ENCODE measurements at regions of chr11 and their contacts with region 1.

Region 1: DNA sequence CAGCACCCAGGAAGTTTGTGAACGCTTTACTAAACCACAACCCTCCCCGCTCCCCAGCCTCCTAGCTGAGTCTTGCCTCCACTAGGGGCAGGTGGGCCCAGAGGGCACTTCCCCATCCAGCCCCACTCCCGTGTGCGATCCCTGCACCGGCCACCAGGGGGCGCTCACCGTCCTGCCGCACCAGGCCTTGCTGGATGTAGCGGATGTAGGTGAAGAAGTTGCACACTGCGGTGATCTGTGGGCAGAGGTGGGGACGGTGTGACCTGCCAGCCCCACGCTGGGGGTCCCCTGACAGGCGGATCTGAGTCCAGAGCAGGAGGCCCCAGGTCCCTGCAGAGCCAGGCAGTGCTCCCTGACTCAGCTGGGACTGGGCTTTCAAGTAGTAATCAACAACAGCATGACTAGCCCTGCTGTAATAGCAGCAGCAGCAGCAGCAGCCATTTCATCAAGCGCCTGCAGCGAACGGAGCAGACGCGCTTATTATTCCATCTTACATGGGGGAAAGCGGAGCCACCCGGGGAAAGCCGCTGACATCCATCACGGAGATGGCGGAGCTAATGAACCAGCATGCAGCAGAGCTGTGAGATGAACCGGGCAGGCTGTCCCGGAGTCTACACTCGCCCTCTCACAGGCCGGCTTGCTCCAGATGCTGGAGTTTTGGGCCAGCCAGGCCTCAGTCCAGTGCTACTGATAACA is 7.9 kb upstream of the FADS3 start:
- DNase-seq: peak; percentile 94
- H3K4me3 Mint-ChIP-seq: no peak overlapping the region
- H3K27ac Mint-ChIP-seq: no peak overlapping the region
- H3K4me1 Mint-ChIP-seq: peaks cover 7% of the 10 kb centered on the region
- H3K27me3 Mint-ChIP-seq: no peaks in the 10 kb centered on the region

Region 2: DNA sequence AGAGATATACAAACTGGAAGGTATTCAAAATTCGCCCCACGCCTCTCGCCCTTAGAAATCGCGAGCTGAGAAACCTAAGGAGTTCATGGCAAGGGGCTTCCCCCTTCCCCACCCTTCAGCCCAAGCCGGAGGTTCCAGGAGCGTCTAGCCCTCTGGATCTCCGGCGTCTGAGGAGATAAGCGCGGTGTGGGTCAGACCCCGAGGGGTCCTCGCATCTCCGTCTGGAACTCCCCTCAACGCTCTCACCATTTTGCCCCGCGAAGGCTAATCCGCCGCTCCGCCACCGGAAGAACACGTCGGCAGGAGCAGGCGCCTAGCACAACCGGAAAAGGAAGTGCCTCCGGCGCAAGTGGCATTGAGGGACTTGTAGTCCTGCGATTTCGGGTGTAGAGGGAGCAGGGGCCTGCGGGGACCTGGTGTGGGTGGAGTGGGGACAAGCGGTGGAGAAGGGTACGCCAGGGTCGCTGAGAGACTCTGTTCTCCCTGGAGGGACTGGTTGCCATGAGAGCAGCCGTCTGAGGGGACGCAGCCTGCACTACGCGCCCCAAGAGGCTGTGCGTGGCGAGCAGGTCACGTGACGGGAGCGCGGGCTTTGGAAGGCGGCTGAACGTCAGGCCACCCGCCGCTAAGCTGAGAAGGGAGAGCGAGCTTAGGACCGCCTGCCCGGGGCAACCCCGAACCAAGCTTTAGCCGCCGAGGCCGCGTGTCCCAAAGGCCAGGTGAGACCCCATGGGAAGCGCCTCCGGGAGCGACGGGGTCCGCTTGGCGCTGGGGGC is 106.8 kb before region 1 on chr11 and contains the starts of genes FEN1 and TMEM258:
- CTCF ChIA-PET with region 1: interaction called, 49 read pairs
- POLR2A ChIA-PET with region 1: no interaction called
- intact Hi-C with region 1: loop called (anchors 2 kb)
- DNase-seq: peak; percentile 92
- H3K4me3 Mint-ChIP-seq: peak within 1 kb of the TSS; percentile 88
- H3K27ac Mint-ChIP-seq: peak within 1 kb of the TSS; percentile 99
- H3K4me1 Mint-ChIP-seq: peaks cover 47% of the 10 kb centered on the region
- H3K27me3 Mint-ChIP-seq: no peaks in the 10 kb centered on the region
- total RNA-seq, gene FEN1: 108 to 111 TPM
- total RNA-seq, gene TMEM258: 191 to 192 TPM

Region 3: DNA sequence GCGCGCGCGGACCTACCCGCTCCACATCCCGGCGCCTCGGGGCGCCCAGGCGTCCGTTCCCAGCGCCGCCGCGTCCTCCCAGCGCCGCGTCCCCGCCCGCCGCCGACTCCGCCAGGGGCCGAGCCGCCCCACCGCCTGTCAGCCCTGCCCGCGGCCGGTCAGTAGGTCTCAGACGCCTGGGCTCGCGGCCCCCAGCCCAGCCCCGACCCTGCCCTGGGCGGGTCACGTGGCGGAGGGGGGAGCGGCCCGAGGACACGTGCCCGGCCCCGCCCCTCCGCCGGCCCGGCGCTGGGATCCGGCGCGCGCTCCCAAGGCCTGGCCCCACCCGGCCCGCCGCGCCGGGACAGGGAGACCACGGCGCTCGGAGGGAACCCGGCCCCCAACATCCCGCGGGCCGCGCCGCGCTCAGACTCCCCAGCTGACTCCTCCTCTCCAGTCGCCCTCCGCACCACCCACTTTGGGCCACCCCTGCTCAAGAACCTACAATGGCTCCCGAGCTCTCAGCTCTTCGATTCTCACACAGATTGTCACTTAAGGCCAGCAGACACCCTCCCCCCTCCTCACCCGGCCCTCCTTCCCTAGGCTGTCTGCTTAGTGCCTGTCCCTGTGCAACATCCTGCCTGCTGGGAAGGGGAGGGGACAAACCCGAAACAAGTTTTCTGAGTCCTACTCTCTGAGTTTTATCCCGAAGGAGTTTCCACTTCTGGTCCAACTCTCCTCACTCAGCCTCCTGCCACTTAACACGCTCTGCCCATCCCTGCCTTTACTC is 18.2 kb after region 1 on chr11 and contains the start of gene RAB3IL1:
- CTCF ChIA-PET with region 1: interaction called, 23 read pairs
- POLR2A ChIA-PET with region 1: no interaction called
- intact Hi-C with region 1: no loop called
- DNase-seq: no peak
- H3K4me3 Mint-ChIP-seq: peak within 1 kb of the TSS; percentile 67
- H3K27ac Mint-ChIP-seq: no peak within 1 kb of the TSS
- H3K4me1 Mint-ChIP-seq: peaks cover 9% of the 10 kb centered on the region
- H3K27me3 Mint-ChIP-seq: peaks cover 48% of the 10 kb centered on the region
- total RNA-seq, gene RAB3IL1: 0.10 to 0.21 TPM

Region 4: DNA sequence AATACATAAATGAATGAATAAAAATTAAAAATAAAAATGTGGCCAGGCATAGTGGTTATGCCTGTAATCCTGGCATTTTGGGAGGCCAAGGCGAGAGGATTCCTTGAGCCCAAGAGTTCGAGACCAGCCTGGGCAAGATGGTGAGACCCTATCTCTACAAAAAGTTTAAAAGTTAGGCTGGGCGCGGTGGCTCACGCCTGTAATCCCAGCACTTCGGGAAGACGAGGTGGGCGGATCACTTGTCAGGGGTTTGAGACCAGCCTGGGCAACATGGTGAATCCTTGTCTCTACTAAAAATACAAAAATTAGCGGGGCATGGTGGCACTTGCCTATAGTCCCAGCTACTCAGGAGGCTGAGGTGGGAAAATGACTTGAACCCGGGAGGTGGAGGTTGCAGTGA is 41.2 kb after region 1 on chr11:
- CTCF ChIA-PET with region 1: interaction called, 237 read pairs
- POLR2A ChIA-PET with region 1: no interaction called
- intact Hi-C with region 1: no loop called
- DNase-seq: no peak
- H3K4me3 Mint-ChIP-seq: no peak overlapping the region
- H3K27ac Mint-ChIP-seq: no peak overlapping the region
- H3K4me1 Mint-ChIP-seq: no peaks in the 10 kb centered on the region
- H3K27me3 Mint-ChIP-seq: peaks cover 7% of the 10 kb centered on the region

Region 5: DNA sequence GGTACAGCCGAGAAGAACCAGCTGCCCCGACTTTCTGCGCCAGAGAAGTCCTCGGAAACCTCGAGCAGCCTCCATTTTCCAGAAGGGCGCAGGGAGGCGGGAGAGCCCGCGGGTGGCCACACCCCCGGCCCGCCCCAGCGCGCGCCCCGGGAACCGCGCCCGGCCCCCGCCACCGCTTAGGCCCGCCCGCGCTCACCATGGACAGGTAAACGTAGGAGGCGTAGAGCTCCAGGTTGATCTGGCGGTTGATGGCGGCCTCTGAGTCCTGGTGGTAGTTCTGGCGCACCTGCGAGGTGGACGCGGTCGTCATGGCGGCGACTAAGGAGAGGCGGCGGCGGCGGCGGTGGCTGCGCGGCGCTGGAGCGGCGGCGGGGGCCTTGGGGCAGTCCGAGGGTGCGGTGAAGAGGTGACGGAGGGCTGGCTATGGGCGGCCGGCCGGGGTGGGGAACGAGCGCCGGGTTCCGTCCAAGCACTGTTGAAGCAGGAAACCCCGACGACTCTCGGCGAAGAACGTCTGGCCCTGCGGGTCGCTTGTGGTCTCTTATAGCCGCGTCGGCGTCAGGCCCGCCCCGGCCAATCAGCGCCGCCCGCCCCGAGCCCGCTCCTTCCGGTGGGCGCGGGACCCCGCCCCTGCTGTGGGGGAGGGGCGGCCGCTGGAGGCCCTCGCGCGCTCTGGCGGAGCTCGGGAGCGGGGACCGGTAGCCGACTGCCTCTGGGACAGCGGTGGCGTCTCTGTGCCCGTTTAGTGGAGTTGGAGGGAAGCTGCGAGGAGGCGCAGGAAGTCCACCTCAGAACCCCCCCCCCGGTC is 68.0 kb after region 1 on chr11 and contains the start of gene FTH1:
- CTCF ChIA-PET with region 1: interaction called, 13 read pairs
- POLR2A ChIA-PET with region 1: no interaction called
- intact Hi-C with region 1: loop called (anchors 5 kb)
- DNase-seq: peak; percentile 90
- H3K4me3 Mint-ChIP-seq: peak within 1 kb of the TSS; percentile 84
- H3K27ac Mint-ChIP-seq: peak within 1 kb of the TSS; percentile 93
- H3K4me1 Mint-ChIP-seq: peaks cover 68% of the 10 kb centered on the region
- H3K27me3 Mint-ChIP-seq: no peaks in the 10 kb centered on the region
- total RNA-seq, gene FTH1: 915 to 922 TPM

Region 6: DNA sequence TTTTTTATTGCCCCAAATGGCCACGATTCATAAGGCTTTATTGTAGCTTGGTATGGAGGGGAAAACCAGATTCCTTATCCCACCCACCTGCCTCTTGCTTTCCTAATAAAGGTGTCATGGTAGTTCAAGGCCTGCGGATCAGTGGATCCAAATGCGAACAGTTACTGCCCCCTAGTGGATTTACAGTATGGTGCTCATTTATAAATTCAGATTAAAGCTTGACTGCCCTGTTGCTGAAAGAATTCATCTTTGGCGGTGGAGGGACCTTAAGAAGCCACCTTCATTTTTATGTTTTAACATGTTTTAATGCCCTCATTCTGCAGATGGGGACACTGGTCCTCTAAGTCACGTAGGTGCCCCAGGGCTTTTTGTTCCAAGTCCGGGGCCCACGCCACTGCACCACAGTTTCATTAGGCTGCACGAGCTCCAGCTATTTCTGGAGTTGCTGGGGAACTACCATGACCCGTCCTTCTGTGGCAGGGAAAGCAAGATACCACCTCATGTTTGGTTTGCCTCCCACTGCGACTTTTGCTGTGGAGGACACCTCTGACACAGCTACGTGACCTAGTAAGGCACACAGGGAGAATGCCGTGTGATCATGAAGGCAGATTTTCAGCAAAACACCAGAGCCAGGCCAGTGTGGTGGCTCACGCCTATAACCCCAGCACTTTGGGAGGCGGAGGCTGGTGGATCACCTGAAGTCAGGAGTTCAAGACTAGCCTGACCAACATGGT is 208.9 kb after region 1 on chr11:
- CTCF ChIA-PET with region 1: interaction called, 277 read pairs
- POLR2A ChIA-PET with region 1: no interaction called
- intact Hi-C with region 1: loop called (anchors 1 kb)
- DNase-seq: peak; percentile 34
- H3K4me3 Mint-ChIP-seq: no peak overlapping the region
- H3K27ac Mint-ChIP-seq: no peak overlapping the region
- H3K4me1 Mint-ChIP-seq: peaks cover 17% of the 10 kb centered on the region
- H3K27me3 Mint-ChIP-seq: no peaks in the 10 kb centered on the region

Measured in activated CD4-positive, alpha-beta memory T cell treated with anti-CD3 and anti-CD28 coated beads for 36 hours (primary cell).